Calu3 (cell line): ENCODE measurements at regions of chr11 and their contacts with region 1.

Region 1: DNA sequence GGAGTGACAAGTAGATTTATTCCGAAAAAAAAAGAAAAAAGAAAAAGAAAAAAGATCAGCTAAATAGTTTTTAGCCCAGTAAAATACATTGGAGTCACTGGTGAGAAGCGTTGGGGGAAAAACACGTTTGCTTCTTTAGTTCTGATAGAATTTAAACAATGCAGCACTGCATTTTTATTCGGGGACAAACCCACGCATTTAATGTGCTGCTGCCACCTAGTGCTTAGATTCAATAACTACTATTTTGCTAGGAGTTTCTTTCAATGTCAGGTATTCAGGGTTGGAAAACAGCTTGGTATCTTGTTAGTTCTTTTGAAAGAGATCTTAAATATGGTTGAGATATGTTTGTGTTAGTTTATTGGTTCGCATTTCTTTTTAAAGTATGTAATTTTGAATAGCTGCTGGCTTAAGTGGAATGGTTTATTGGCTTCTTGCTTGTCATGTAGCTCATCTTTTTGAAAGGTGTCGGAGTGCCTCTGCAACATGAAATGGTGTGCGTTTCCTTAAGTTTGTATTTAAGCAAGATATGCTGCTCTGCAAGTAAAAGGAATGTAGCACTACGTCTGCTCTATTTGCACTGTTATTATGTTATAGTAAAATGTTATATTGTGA is 41.9 kb downstream of the SVIP start:
- DNase-seq: peak; percentile 33
- H3K4me3 Mint-ChIP-seq: no peak overlapping the region
- H3K27ac Mint-ChIP-seq: no peak overlapping the region
- H3K4me1 Mint-ChIP-seq: peaks cover 23% of the 10 kb centered on the region
- H3K27me3 Mint-ChIP-seq: no peaks in the 10 kb centered on the region
- CTCF ChIP-seq: peak; percentile 50

Region 2: DNA sequence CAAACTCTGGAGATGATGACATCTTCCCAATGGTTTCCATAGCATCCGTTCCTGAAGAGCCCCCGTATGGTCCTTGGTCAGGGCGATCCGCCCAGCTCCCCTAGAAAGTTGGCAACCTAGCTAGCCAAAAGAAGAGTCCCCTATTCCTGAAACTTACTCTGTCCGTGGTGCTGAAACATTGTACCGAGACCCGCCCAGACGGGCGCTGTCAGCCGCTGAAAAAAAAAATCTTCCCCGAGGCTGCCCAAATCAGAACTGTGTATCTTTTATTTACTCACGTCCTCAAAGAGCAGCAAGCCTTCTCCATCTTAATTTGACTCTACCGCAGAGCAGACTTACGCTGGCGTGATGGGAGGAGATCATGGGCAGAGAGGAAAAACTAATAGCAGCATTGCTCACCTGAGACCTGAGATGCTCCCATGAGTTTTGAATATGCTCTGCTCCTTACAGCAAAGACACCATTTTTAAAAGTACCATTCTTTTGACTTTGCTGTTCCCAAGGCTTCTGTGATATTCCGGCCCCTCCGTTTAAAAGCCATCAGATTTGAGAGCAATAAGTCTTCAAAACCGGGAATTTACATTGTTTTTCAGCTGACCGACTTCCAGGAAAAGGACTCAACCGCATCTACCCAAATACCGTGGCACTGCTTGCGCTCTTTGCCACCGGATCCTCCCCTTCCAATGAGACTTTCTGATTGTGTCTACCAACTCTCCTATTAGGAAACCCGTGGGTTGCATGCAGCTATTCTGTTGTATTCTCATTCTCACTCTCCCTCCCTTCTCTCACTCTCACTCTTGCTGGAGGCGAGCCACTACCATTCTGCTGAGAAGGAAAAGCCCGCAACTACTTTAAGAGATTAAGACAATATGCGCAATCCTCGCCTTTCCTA is 449.8 kb before region 1 on chr11 and contains the start of gene SLC17A6:
- CTCF ChIA-PET with region 1: interaction called, 4 read pairs
- intact Hi-C with region 1: loop called (anchors 1 kb)
- DNase-seq: peak; percentile 32
- H3K4me3 Mint-ChIP-seq: no peak within 1 kb of the TSS
- H3K27ac Mint-ChIP-seq: no peak within 1 kb of the TSS
- H3K4me1 Mint-ChIP-seq: peaks cover 11% of the 10 kb centered on the region
- H3K27me3 Mint-ChIP-seq: peaks cover 62% of the 10 kb centered on the region
- CTCF ChIP-seq: no peak
- total RNA-seq, gene SLC17A6: not detected in 2 replicates

Region 3: GRCh38 chr11:22426915-22427314 is 360.7 kb before region 1 on chr11:
- CTCF ChIA-PET with region 1: no interaction called
- intact Hi-C with region 1: loop called (anchors 5 kb)
- DNase-seq: no peak
- H3K4me3 Mint-ChIP-seq: no peak overlapping the region
- H3K27ac Mint-ChIP-seq: no peak overlapping the region
- H3K4me1 Mint-ChIP-seq: no peaks in the 10 kb centered on the region
- H3K27me3 Mint-ChIP-seq: no peaks in the 10 kb centered on the region
- CTCF ChIP-seq: no peak

Region 4: GRCh38 chr11:22829231-22830081 is 41.8 kb after region 1 on chr11 and contains the start of gene SVIP:
- CTCF ChIA-PET with region 1: interaction called, 4 read pairs
- intact Hi-C with region 1: loop called (anchors 1 kb)
- DNase-seq: peak; percentile 98
- H3K4me3 Mint-ChIP-seq: peak within 1 kb of the TSS; percentile 85
- H3K27ac Mint-ChIP-seq: peak within 1 kb of the TSS; percentile 80
- H3K4me1 Mint-ChIP-seq: peaks cover 12% of the 10 kb centered on the region
- H3K27me3 Mint-ChIP-seq: no peaks in the 10 kb centered on the region
- CTCF ChIP-seq: peak; percentile 75
- total RNA-seq, gene SVIP: 39.1 and 49.9 TPM in 2 replicates